Heart right ventricle (tissue), 16 donors: ENCODE measurements at regions of chr11 and their contacts with region 1.

Region 1: GRCh38 chr11:44565211-44565952 is at the start of gene CD82:
- DNase-seq: peak; percentile 100
- ATAC-seq: peak; percentile 95 to 98 (median 96)
- H3K4me3 ChIP-seq: peak within 1 kb of the TSS; percentile 48 to 80 (median 64)
- H3K27ac ChIP-seq: peak within 1 kb of the TSS; percentile 91 to 99 (median 96)
- H3K4me1 ChIP-seq: peaks cover 15 to 70% (median 53%) of the 10 kb centered on the region in 9 donors
- H3K27me3 ChIP-seq: no peaks in the 10 kb centered on the region
- CTCF ChIP-seq: peak; percentile 7 to 58 (median 41)
- total RNA-seq, gene CD82: 25.8 to 66.7 (median 35.2) TPM

Region 2: DNA sequence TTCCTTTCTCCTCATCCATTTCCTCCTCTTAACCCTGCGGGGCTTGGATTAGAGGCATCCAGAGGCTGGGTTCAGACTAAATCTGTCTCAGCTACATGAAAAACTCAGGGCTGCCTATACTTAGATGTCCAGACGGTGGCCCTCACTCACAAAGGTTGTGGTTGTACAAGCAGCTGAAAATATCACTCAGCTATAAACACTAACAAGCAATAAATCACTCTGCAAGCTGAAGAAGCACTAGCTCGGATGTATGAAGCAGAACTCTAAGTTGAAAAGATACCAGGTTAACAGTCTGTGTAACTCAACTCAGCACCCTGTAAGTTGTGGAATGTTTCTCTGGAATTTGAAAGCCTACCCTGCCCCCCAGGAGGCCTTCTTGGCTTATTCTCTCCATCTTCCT is 387.0 kb before region 1 on chr11:
- intact Hi-C with region 1: no loop called
- DNase-seq: peak in 1 of 2 donors; percentile 20
- ATAC-seq: peak in 6 of 8 donors; percentile 8 to 72 (median 46)
- H3K4me3 ChIP-seq: no peak overlapping the region
- H3K27ac ChIP-seq: no peak overlapping the region
- H3K4me1 ChIP-seq: peaks cover 0 to 14% (median 0%) of the 10 kb centered on the region in 9 donors
- H3K27me3 ChIP-seq: no peaks in the 10 kb centered on the region
- CTCF ChIP-seq: peak in 3 of 9 donors; percentile 28 to 39 (median 29)

Region 3: DNA sequence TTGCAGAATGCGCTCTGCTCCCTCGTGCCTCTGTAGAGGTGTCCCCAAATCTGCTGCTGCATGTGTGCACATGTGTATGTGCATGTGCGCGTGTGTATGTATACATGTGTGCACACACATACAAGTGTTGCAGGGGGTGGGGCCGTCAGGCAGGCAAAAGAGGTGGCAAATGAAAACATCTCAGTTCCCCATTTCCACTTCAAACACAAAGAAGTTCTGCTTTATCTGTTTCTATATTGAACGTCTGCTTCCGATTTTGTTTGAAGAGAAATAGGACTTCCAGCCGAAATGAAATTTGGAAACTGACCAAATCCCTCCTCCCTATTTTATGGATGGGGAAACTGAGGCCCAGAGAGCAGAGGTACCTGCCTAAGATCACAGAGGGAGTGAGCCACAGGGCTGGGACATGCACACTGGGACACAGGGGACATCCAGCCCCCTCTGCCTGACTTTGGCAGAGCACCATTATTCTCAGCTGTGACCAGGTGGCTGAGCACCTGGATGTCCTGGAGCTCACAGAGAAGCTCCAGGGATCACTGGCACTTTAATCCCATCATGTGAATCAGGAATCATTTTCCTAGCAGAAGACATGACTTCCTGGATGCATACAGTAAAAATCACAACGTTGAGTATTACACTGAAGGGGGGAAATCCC is 214.2 kb before region 1 on chr11:
- intact Hi-C with region 1: no loop called
- DNase-seq: no peak
- ATAC-seq: no peak
- H3K4me3 ChIP-seq: no peak overlapping the region
- H3K27ac ChIP-seq: no peak overlapping the region
- H3K4me1 ChIP-seq: no peaks in the 10 kb centered on the region
- H3K27me3 ChIP-seq: peaks cover 0 to 23% (median 0%) of the 10 kb centered on the region in 7 donors
- CTCF ChIP-seq: no peak

Region 4: DNA sequence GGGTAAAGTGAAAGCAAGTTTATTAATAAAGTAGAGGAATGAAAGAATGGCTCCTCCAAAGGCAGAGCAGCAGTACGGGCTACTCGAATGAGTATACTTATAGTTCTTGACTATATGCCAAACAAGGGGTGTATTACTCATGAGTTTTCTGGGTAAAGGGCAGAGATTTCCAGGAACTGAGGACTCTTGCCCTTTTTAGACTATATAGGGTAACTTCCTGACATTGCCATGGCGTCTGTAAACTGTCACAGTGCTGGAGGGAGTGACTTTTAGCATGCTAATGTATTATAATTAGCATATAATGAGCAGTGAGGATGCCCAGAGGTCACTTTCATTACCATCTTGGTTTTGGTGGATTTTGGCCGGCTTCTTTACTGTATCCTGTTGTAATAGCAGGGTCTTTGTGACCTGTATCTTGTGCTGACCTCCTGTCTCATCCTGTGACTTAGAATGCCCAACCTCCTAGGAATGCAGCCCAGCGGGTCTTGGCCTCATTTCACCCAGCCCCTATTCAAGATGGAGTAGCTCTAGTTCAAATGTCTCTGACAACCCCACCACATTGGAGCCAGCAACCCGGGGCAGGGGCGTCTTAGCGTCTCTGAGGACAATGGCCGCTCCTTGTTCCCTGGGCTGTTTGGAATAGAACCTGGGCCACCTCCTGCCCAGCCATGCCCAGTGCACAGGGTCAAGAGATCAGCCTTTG is 34.8 kb before region 1 on chr11:
- intact Hi-C with region 1: no loop called
- DNase-seq: no peak
- ATAC-seq: no peak
- H3K4me3 ChIP-seq: no peak overlapping the region
- H3K27ac ChIP-seq: peak overlapping the region in 1 of 10 donors; percentile 44
- H3K4me1 ChIP-seq: peaks cover 0 to 22% (median 5%) of the 10 kb centered on the region in 9 donors
- H3K27me3 ChIP-seq: no peaks in the 10 kb centered on the region
- CTCF ChIP-seq: no peak

Region 5: DNA sequence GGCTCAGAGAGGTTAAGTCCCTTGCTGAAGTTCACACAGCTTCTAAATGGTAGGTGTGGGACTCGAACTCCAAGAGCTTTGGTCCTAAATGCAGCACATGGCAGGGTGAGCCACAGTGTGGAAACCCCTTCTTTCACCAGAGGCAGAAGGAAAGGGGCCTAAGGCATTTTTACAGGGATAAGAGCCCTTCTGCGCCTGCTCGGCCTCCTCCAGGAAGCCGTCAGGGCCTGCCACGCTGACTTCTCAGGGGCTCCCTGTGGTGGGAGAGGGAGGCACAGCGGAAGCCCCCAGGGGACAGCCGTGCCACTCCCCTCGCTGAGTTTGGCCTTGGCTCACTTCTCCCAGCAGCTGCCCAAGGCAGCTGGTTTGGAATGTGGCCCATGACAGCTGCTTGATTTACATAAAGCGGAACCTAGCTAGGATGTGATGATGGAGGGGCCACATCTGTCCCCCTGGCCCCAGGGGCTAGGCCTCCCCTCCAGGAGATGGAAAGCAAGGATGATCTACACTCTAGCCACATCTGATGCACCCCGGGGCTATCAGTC is 35.5 kb after region 1 on chr11:
- intact Hi-C with region 1: loop called in 3 of 10 experiments (anchors 5 kb)
- DNase-seq: peak; percentile 38 to 49
- ATAC-seq: peak; percentile 8 to 57 (median 38)
- H3K4me3 ChIP-seq: no peak overlapping the region
- H3K27ac ChIP-seq: peak overlapping the region in 2 of 10 donors; percentile 31 to 55
- H3K4me1 ChIP-seq: peaks cover 14 to 74% (median 59%) of the 10 kb centered on the region in 9 donors
- H3K27me3 ChIP-seq: no peaks in the 10 kb centered on the region
- CTCF ChIP-seq: no peak

Region 6: DNA sequence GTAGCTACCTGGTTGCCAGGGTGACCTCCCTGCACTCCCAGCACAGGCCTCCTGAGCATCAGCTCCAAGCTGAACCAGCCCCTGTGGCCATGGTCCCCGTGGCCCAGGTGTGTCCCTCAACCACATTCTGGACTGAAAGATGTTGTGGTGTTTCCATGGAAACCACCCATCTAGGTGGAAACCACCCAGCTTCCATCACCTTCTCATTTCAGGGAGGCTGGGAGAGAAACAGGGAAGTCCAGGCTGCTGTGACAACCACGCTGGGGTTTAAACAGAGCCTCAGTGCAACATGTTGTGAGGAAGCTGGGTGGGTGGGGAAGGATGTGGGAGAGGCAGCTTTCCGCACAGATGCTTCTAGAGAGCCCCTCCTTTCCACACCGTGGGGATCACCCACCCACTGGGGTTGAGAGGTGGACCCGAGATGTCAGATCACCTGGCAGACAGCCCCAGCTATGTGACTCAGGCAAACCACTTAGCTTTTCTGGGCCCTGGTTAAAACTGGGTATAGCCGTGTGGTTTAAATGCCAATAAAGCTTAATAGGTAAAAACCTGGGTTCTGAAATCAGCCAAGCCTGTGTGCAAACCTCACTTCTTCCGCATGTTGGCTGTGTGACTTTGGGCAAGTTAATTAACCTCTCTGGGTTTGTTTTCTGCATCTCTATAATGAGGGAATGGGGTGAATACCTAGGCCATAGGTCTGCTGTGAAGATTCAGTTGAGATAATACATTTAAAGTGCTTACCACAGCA is 46.5 kb after region 1 on chr11:
- intact Hi-C with region 1: loop called in 1 of 10 experiments (anchors 2 kb)
- DNase-seq: peak in 1 of 2 donors; percentile 41
- ATAC-seq: peak in 7 of 8 donors; percentile 12 to 78 (median 39)
- H3K4me3 ChIP-seq: no peak overlapping the region
- H3K27ac ChIP-seq: peak overlapping the region in 9 of 10 donors; percentile 8 to 57 (median 43)
- H3K4me1 ChIP-seq: peaks cover 9 to 76% (median 58%) of the 10 kb centered on the region in 9 donors
- H3K27me3 ChIP-seq: no peaks in the 10 kb centered on the region
- CTCF ChIP-seq: no peak

Region 7: DNA sequence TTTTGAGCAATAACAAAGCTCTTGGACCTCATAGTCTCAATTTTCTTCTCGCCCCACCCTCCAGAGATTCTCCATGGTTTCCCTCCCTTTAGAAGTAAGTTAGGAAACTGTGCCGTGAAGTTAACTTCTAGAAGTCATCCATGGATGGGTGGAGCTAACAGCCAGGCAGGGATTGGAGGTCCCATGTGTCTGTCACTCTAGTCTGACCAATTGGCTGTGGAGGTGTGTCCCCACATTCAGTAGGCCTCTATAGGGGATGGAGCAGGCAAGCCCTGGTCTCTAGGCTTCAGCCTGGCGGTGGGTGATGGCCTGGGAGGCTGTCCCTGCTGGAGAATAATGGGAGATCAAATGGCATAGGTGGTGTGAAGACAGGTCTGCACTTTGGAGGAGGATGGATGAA is 334.6 kb after region 1 on chr11:
- intact Hi-C with region 1: loop called in 2 of 10 experiments (anchors 5 kb)
- DNase-seq: no peak
- ATAC-seq: peak in 6 of 8 donors; percentile 40 to 56 (median 48)
- H3K4me3 ChIP-seq: no peak overlapping the region
- H3K27ac ChIP-seq: no peak overlapping the region
- H3K4me1 ChIP-seq: peaks cover 0 to 12% (median 0%) of the 10 kb centered on the region in 9 donors
- H3K27me3 ChIP-seq: no peaks in the 10 kb centered on the region
- CTCF ChIP-seq: no peak

Region 8: DNA sequence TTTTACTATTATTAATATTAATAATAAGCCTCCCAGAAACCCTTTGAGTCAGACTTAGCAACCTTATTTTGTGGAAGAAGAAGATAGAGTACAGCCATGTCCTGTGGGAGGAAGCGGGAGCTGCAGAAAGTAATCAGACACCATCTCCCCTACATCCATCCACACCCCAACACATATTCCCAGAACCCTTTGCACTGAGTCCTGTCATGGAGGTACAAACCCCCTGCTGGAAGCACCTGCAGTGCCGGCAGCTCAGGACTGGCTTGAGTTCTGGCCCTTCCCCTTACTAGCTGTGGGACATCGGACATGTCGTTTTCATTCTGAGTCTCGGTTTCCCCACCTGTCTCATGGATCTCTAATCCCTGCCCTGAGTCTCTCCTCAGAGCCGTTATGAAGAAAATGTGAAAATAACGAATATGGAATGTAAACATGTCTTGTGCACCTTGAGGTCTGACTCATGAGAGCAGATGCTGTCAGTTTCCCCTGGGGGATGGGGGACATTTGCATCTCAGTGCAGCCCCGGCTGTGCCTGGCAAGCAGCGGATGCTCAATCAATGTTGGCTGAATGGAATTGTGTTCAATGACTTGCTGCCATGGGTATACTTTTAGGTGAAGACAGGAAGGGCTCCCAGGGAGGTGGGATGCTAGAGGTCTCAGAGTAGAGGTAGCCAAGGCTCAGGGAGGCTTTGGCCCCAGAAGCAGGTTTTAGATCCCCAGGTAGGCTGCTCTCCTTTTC is 339.9 kb after region 1 on chr11:
- intact Hi-C with region 1: loop called in 4 of 10 experiments (anchors 5 to 10 kb)
- DNase-seq: no peak
- ATAC-seq: no peak
- H3K4me3 ChIP-seq: no peak overlapping the region
- H3K27ac ChIP-seq: no peak overlapping the region
- H3K4me1 ChIP-seq: peaks cover 0 to 29% (median 5%) of the 10 kb centered on the region in 9 donors
- H3K27me3 ChIP-seq: no peaks in the 10 kb centered on the region
- CTCF ChIP-seq: no peak

Region 9: DNA sequence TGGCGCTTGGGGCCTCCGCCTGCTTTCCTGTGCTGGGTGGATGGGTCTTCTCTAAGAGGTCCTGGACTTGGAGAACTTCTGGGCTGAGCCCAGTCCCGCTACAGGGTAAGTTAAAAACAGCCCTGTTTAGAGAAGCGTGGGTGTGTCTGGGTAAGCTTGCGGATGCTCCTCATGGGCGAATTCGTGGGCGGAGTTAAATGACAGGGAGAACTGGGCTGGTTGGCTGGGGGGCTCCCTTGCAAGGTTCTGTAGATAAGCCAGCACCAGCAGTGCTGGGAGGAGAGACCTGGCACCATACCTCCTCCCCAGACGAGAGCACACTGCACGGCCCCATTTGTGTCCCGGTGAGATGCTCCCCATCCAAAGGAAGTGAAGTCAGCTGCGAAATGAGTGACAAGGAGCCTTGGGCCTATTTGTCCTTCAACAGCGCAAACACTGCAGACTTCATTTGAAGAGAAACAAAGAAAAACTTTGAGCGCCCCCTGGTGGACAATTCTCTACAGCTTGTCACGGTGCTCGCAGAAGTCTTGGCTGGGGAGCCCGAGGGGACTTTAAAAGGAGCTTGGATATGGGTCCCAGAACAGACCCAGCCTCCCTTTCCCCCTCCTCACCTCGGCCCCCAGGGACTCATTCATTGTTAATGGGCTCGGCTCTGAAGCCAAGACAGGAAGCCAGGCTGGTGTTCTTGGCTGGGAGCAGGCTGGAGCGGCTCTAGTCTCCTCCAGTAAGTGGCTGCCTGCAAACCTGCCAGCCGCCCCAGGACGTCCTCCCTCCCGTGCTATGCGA is 345.8 kb after region 1 on chr11:
- intact Hi-C with region 1: loop called in 4 of 10 experiments (anchors 5 to 10 kb)
- DNase-seq: peak; percentile 67 to 95
- ATAC-seq: peak; percentile 73 to 93 (median 82)
- H3K4me3 ChIP-seq: peak overlapping the region in 3 of 10 donors; percentile 2 to 19 (median 10)
- H3K27ac ChIP-seq: peak overlapping the region in 8 of 10 donors; percentile 6 to 62 (median 30)
- H3K4me1 ChIP-seq: peaks cover 10 to 68% (median 37%) of the 10 kb centered on the region in 9 donors
- H3K27me3 ChIP-seq: no peaks in the 10 kb centered on the region
- CTCF ChIP-seq: peak; percentile 83 to 95 (median 91)